Dendritic cell treated with granulocyte-macrophage colony-stimulating factor and Interleukin-4, amounts not matched to agents 40 ng/mL and 50 ng/mL, for 4 days (primary cell): ENCODE measurements at regions of chr17 and their contacts with region 1.

Region 1: GRCh38 chr17:55238179-55238930 is 26.4 kb upstream of the HLF start:
- H3K4me3 Mint-ChIP-seq: peak overlapping the region; percentile 67
- H3K27ac Mint-ChIP-seq: no peak overlapping the region
- H3K4me1 Mint-ChIP-seq: peaks cover 14% of the 10 kb centered on the region
- H3K27me3 Mint-ChIP-seq: peaks cover 27% of the 10 kb centered on the region

Region 2: DNA sequence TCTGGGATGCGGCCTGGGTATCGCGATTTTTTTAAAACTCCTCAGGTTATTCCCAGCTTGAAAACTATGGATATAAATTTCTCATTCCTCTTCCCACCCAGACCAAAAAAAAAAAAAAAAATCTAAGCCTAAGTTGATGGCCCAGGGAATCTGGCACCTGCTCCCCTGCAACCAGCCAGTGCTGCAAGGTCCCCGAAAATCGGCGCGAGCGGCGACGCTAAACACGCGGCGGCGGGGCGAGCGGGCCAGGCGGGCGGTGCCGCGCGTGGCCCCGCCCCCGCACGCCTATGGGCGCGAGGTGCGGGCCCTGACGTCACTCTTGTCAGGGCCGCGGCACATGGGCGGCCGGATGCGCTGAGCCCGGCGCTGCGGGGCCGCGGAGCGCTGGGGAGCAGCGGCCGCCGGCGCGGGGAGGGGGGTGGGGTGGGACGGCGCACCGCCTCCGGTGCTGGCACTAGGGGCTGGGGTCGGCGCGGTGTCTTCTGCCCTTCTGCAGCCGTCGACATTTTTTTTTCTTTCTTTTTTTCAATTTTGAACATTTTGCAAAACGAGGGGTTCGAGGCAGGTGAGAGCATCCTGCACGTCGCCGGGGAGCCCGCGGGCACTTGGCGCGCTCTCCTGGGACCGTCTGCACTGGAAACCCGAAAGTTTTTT is 26.4 kb after region 1 on chr17 and contains the start of gene HLF:
- intact Hi-C with region 1: loop called (anchors 2 kb)
- H3K4me3 Mint-ChIP-seq: peak within 1 kb of the TSS; percentile 65
- H3K27ac Mint-ChIP-seq: peak within 1 kb of the TSS; percentile 48
- H3K4me1 Mint-ChIP-seq: peaks cover 26% of the 10 kb centered on the region
- H3K27me3 Mint-ChIP-seq: peaks cover 83% of the 10 kb centered on the region